ENCODE measurements at regions of chr3 and their contacts with region 1.

Region 1: DNA sequence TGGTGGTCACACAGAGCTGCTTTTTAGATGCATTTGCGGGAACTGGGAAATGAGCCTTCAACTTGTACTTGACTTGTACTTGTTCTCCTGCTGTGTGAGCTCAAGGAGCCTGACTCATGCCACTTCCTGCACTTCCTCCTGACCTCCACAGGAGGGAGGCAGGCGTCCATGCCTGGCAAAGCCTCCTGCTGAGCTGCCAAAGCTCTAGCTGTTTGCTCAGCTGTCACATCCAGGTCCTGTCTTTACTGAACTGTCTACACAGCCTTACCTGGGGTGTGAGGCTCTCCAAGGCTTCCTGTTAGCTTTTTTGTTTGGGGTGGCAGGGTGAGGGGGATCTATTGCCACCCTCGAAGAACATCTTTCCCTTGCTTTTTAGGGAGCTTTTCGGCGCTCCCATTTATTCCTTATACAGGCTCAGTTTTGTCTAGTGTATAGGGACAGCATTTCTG is 6.4 kb downstream of the THPO start:
- DNase-seq: peak; percentile 73 to 74
- ATAC-seq: peak; percentile 86 to 91 (median 87)
- H3K4me3 ChIP-seq: no peak overlapping the region
- H3K27ac ChIP-seq: no peak overlapping the region
- H3K4me1 ChIP-seq: peaks cover 6 to 33% (median 24%) of the 10 kb centered on the region in 9 donors
- H3K27me3 ChIP-seq: peaks cover 0 to 21% (median 12%) of the 10 kb centered on the region in 7 donors
- CTCF ChIP-seq: peak; percentile 78 to 97 (median 94)

Region 2: DNA sequence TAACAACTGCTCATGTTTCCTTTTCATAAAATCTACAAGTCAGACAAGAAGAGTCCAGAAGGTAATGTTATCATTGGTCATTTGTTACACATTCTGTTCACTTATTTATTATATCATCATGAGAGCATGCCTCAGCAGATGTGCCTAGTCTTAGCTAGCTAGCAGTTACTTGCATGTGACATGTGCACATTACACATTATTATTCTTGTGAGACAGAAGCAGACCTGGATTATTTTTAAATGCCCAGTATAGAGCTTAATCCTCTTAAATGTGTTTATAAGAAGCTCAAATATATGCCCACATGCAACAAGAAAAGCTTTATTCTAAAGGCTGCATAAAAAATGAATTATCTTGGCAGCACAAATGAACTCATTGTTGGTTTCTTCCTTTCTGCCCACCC is 661.4 kb before region 1 on chr3:
- intact Hi-C with region 1: no loop called
- DNase-seq: no peak
- ATAC-seq: no peak
- H3K4me3 ChIP-seq: no peak overlapping the region
- H3K27ac ChIP-seq: no peak overlapping the region
- H3K4me1 ChIP-seq: peaks cover 0 to 14% (median 0%) of the 10 kb centered on the region in 9 donors
- H3K27me3 ChIP-seq: no peaks in the 10 kb centered on the region
- CTCF ChIP-seq: no peak

Region 3: GRCh38 chr3:184345317-184346144 is 26.1 kb before region 1 on chr3:
- intact Hi-C with region 1: no loop called
- DNase-seq: peak; percentile 46 to 67
- ATAC-seq: peak; percentile 50 to 87 (median 74)
- H3K4me3 ChIP-seq: no peak overlapping the region
- H3K27ac ChIP-seq: peak overlapping the region in 4 of 10 donors; percentile 22 to 46 (median 40)
- H3K4me1 ChIP-seq: peaks cover 0 to 23% (median 8%) of the 10 kb centered on the region in 9 donors
- H3K27me3 ChIP-seq: no peaks in the 10 kb centered on the region
- CTCF ChIP-seq: peak in 7 of 9 donors; percentile 33 to 59 (median 55)

Region 4: GRCh38 chr3:184469423-184469822 is 97.8 kb after region 1 on chr3:
- intact Hi-C with region 1: loop called in 2 of 10 experiments (anchors 5 kb)
- DNase-seq: no peak
- ATAC-seq: no peak
- H3K4me3 ChIP-seq: no peak overlapping the region
- H3K27ac ChIP-seq: no peak overlapping the region
- H3K4me1 ChIP-seq: peaks cover 6 to 40% (median 14%) of the 10 kb centered on the region in 9 donors
- H3K27me3 ChIP-seq: peaks cover 0 to 14% (median 0%) of the 10 kb centered on the region in 7 donors
- CTCF ChIP-seq: peak in 6 of 9 donors; percentile 25 to 50 (median 32)

Region 5: DNA sequence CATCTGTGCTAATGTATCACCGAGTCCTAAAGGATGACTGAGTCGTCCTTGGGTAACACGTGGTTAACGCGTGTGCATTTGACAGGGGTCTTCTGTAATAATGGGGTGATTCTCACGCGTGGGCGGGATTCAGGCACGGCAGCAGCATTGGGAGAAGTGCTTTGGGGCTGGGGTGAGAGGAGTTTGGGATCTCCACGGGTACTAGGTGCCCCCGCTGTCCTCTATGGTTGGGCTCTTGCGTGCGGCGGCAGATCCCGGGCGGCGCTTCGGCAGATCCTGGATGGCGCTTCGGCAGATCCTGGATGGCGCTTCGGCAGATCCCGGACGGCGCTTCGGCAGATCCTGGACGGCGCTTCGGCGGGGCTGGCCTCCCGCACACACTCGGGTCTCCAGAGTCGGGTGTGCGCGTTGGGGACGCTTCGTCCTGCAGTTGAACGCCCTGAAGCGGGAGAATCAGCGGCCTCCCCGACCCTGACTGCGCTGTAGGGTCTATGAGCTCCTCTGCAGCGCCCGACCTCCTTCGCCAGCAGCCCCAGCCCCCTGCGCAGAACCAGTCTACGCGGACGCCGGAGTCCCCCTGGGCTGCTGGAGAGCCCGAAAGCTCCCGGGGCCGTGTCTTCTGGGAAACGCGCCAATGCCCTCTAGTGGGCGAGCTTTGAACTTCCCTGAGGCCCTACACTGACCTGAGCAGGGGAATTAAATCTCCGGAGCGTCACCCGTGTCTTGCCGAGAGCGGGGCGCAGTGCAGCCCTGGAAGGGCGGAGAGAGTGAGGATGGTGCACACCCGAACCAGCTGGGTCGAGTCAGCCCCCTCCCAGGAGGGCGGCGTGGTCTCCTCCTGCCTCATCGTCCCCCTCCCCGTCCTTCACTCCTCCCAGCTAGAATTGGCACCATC is 141.9 kb after region 1 on chr3:
- intact Hi-C with region 1: loop called in 8 of 10 experiments (anchors 2 to 10 kb)
- DNase-seq: peak; percentile 85 to 88
- ATAC-seq: peak; percentile 96 to 100 (median 98)
- H3K4me3 ChIP-seq: peak overlapping the region in 9 of 10 donors; percentile 22 to 57 (median 52)
- H3K27ac ChIP-seq: peak overlapping the region in 6 of 10 donors; percentile 29 to 69 (median 54)
- H3K4me1 ChIP-seq: peaks cover 0 to 23% (median 10%) of the 10 kb centered on the region in 9 donors
- H3K27me3 ChIP-seq: peaks cover 0 to 68% (median 51%) of the 10 kb centered on the region in 7 donors
- CTCF ChIP-seq: peak; percentile 78 to 94 (median 87)

Region 6: DNA sequence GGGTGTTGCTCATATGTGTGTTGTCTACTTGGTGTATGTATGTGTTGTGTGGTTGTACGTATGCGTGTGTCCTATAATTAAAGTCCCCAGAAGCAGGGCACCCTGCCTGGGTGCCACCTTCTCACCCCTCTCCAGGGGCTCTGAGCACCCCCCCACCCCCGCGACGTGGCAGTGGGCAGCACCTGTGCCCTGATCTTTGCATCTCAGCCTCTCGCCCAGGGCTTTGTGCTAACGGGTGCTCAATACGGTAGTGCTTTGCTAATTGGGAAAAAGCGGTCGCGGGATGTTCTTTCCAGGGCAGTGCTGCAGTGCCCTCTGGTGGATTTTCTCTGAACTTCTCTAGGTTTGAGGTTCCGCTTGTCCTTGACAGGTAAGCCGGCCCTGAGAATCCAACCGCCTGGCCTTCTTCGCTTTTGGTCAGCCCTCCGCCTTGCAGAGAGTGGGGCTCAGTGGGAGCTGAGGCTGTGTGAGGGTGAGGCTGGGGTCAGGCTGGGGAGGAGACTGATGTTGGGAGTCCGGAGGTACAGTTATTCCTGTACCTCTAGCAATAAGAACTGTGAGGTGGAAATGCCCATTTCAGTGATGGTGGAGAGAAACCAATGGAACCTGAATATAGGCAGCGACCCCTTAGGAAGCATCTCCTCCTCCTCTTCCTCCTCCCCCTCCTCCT is 172.4 kb after region 1 on chr3:
- intact Hi-C with region 1: loop called (anchors 1 to 5 kb)
- DNase-seq: peak in 1 of 2 donors; percentile 81
- ATAC-seq: peak; percentile 61 to 77 (median 72)
- H3K4me3 ChIP-seq: no peak overlapping the region
- H3K27ac ChIP-seq: no peak overlapping the region
- H3K4me1 ChIP-seq: peaks cover 0 to 12% (median 3%) of the 10 kb centered on the region in 9 donors
- H3K27me3 ChIP-seq: peaks cover 0 to 45% (median 35%) of the 10 kb centered on the region in 7 donors
- CTCF ChIP-seq: peak; percentile 85 to 97 (median 92)

Region 7: DNA sequence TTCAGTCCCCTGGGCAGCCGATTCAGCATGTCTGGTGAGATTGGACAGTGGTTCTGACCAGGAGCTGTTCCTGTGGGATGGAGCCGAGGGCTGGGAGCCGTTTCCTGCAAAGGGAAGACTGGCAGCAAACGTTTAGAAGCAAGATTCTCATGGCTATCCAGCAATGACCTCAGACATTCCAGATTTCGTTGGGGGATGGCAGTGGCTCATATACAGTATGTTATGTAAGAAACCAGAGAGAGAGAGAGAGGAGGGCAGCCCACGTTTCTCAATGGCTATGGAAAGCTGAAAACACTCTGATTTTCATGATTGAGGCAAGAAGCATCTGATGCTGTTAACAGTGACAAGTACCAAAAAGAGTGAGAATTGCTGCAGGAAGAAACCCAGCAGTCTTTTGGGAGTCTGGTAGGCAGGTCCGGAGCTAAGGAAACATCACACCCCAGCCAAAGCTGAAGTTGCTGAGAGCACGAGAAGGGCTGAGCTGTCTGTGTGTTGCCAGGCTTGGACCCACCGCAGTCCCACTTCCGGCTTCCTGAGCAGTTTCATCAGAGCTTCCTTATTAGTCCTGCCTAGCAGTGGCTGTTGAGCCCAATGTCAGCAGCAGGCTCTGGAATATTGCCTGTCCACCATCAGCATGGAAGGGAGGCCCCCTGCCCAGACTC is 414.8 kb after region 1 on chr3:
- intact Hi-C with region 1: loop called in 1 of 10 experiments (anchors 10 kb)
- DNase-seq: peak; percentile 42 to 64
- ATAC-seq: peak; percentile 77 to 91 (median 84)
- H3K4me3 ChIP-seq: peak overlapping the region in 5 of 10 donors; percentile 10 to 28 (median 10)
- H3K27ac ChIP-seq: peak overlapping the region in 8 of 10 donors; percentile 29 to 72 (median 57)
- H3K4me1 ChIP-seq: peaks cover 3 to 22% (median 15%) of the 10 kb centered on the region in 9 donors
- H3K27me3 ChIP-seq: peaks cover 0 to 4% (median 0%) of the 10 kb centered on the region in 7 donors
- CTCF ChIP-seq: no peak